ENCODE measurements at regions of chr19 and their contacts with region 1.

Region 1: GRCh38 chr19:40165362-40165937 is 25.8 kb upstream of the MAP3K10 start:
- DNase-seq: peak; percentile 99
- ATAC-seq: peak; percentile 76
- H3K4me3 ChIP-seq: peak overlapping the region in 1 of 2 experiments; percentile 0; a peak in 1 of 4 replicates
- H3K27ac ChIP-seq: 0 out of 2 replicates have a peak overlapping the region, but pooled peaks have one; percentile 0
- H3K4me1 ChIP-seq: peaks cover 15% of the 10 kb centered on the region
- H3K27me3 ChIP-seq: no peaks in the 10 kb centered on the region
- CTCF ChIP-seq: no peak

Region 2: DNA sequence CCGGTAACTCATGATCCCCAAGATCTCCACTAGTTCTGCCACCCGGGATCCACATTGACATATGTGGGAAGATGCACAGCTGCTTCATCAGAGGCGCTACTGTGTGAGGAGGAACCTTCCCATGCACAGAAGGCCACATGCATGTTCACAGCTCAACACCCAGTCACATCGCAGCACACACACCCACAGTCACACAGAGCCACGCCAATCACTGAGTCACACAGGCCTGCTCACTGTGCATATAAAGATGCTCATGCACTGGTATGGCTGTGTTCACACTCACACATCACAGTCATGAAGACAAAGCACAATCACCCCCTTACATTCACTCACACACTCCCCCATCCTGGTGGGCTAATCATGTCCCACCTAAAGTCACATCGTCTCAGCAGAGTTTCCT is 437.4 kb before region 1 on chr19:
- CTCF ChIA-PET with region 1: interaction called, 15 read pairs
- POLR2A ChIA-PET with region 1: interaction called, 6 read pairs
- in situ Hi-C with region 1: no loop called
- intact Hi-C with region 1: no loop called
- DNase-seq: no peak
- ATAC-seq: peak; percentile 51
- H3K4me3 ChIP-seq: no peak overlapping the region
- H3K27ac ChIP-seq: no peak overlapping the region
- H3K4me1 ChIP-seq: no peaks in the 10 kb centered on the region
- H3K27me3 ChIP-seq: peaks cover 61% of the 10 kb centered on the region
- CTCF ChIP-seq: no peak

Region 3: DNA sequence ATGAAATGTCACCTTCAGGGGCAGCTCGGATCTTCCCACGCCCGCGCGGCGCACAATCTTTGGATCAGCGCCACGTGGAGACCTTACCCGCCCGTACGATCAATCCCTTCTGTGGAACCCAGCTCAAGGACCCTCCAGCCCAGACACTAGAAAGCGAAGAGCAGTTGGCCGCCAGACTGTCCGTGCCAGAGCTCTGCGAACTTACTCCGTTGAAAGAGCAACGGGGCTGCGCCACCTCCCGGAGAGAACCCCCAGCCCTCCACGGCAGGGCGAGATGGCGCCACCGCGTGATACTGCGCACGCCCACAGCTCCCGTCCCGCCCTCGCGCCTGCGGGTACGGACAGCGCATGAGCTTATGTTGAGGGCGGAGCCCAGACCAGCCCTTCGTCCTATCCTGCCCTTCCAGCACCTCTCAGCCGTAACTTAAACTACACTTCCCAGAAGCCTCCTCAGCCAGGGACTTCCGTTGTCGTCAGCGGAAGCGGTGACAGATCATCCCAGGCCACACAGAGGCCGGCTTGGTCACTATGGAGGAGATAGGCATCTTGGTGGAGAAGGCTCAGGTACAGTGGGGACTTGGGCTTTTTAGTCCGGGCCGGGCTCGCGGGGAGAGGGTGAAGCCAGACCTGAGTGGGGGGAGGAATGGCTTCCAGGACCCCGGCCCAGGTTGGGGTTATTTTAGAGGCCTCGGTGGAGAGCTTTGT is 194.6 kb before region 1 on chr19 and contains the start of gene PSMC4:
- CTCF ChIA-PET with region 1: interaction called, 15 read pairs
- POLR2A ChIA-PET with region 1: interaction called, 3 read pairs
- in situ Hi-C with region 1: no loop called
- intact Hi-C with region 1: no loop called
- DNase-seq: peak; percentile 100
- ATAC-seq: peak; percentile 98
- H3K4me3 ChIP-seq: peak within 1 kb of the TSS; percentile 35 to 50
- H3K27ac ChIP-seq: peak within 1 kb of the TSS; percentile 82
- H3K4me1 ChIP-seq: peaks cover 17% of the 10 kb centered on the region
- H3K27me3 ChIP-seq: no peaks in the 10 kb centered on the region
- CTCF ChIP-seq: no peak
- total RNA-seq, gene PSMC4: 2,386 TPM

Region 4: DNA sequence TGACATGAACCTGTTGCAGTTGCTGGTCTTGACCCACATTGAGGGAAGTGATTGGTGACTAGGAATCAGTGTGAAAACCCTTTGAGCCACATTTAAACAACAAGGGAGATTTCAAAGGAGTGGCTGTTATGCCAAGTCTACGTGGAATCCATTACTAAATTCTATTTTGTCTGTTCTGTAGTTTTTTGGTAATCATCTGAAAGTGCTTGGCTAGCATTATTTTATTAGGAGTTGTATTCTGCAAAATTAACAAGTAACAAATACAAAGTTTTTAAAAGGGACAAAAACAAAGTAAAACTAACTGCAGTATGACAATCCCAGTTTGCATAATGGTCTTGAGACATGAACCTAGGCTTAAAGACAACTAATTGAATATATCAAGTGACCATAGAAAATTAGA is 60.7 kb before region 1 on chr19:
- CTCF ChIA-PET with region 1: interaction called, 14 read pairs
- POLR2A ChIA-PET with region 1: no interaction called
- in situ Hi-C with region 1: no loop called
- intact Hi-C with region 1: no loop called
- DNase-seq: no peak
- ATAC-seq: peak; percentile 25; the same call in 1 of the 2 replicates
- H3K4me3 ChIP-seq: no peak overlapping the region
- H3K27ac ChIP-seq: no peak overlapping the region
- H3K4me1 ChIP-seq: no peaks in the 10 kb centered on the region
- H3K27me3 ChIP-seq: peaks cover 8% of the 10 kb centered on the region; the same call in 1 of the 2 replicates
- CTCF ChIP-seq: no peak

Region 5: GRCh38 chr19:40184273-40184672 is 18.8 kb after region 1 on chr19:
- CTCF ChIA-PET with region 1: interaction called, 113 read pairs
- POLR2A ChIA-PET with region 1: interaction called, 11 read pairs
- in situ Hi-C with region 1: no loop called
- intact Hi-C with region 1: no loop called
- DNase-seq: no peak
- ATAC-seq: no peak
- H3K4me3 ChIP-seq: no peak overlapping the region
- H3K27ac ChIP-seq: no peak overlapping the region
- H3K4me1 ChIP-seq: no peaks in the 10 kb centered on the region
- H3K27me3 ChIP-seq: peaks cover 17% of the 10 kb centered on the region
- CTCF ChIP-seq: no peak

Region 6: DNA sequence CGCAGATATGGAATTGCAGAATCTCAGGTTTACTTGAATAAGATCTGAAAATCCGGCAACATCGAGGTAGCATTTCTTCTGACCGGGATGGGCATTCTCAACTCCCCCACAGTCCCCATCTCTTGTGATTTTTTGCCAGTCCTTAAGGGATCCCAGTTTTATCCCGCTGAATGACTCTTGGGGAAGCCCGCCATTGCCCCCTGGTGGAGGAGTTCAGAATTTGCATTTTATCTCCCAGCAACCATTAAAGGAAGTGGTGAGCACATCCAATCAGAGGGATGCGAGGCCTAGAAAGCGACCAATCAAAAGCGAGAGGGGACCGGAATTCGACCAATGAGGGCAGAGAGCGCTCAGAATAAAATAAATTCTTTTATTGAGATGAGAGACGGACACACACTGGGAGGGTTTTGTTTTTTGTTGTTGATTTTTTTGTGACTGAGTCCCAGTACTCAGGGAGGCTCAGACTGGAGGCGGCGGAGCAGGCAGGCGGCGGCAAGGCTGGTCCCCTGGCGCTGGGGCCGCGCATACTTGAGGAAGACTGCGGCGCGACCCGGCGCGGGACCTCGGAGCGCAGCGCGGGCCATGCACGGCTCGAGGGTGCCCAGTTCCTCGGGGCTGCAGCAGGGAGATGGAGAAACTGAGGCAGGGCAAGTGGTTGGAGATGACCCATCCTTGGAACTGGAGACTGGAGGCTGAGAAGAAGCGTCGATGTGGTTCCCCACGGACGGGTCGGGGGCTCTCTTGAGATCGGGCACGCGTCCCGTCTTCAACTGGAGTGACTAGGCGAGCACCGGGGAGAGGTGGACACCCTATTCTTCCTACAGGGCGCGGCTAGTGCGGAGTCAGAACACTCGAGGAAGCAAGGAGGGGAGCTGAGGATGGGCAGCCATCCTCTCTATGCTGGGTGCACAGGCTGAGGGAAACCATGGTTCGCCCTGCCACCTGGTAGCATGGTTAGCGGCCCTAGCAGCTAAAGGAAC is 56.7 kb after region 1 on chr19:
- CTCF ChIA-PET with region 1: interaction called, 21 read pairs
- POLR2A ChIA-PET with region 1: interaction called, 4 read pairs
- in situ Hi-C with region 1: no loop called
- intact Hi-C with region 1: no loop called
- DNase-seq: peak; percentile 100
- ATAC-seq: peak; percentile 23
- H3K4me3 ChIP-seq: no peak overlapping the region
- H3K27ac ChIP-seq: no peak overlapping the region
- H3K4me1 ChIP-seq: peaks cover 39% of the 10 kb centered on the region
- H3K27me3 ChIP-seq: peaks cover 26% of the 10 kb centered on the region
- CTCF ChIP-seq: no peak

Region 7: GRCh38 chr19:40523322-40524047 is 358.0 kb after region 1 on chr19:
- CTCF ChIA-PET with region 1: no interaction called
- POLR2A ChIA-PET with region 1: no interaction called
- in situ Hi-C with region 1: no loop called
- intact Hi-C with region 1: no loop called
- DNase-seq: no peak
- ATAC-seq: peak; percentile 86
- H3K4me3 ChIP-seq: no peak overlapping the region
- H3K27ac ChIP-seq: no peak overlapping the region
- H3K4me1 ChIP-seq: 0 out of 2 replicates have a peak, but pooled peaks cover 4% of the 10 kb centered on the region
- H3K27me3 ChIP-seq: no peaks in the 10 kb centered on the region
- CTCF ChIP-seq: peak; percentile 80

Region 8: GRCh38 chr19:41924151-41925145 is 1759.0 kb after region 1 on chr19:
- CTCF ChIA-PET with region 1: no interaction called
- POLR2A ChIA-PET with region 1: interaction called, 10 read pairs
- in situ Hi-C with region 1: no loop called
- intact Hi-C with region 1: no loop called
- DNase-seq: no peak
- ATAC-seq: no peak
- H3K4me3 ChIP-seq: no peak overlapping the region
- H3K27ac ChIP-seq: no peak overlapping the region
- H3K4me1 ChIP-seq: no peaks in the 10 kb centered on the region; the same call in 1 of the 2 replicates
- H3K27me3 ChIP-seq: no peaks in the 10 kb centered on the region
- CTCF ChIP-seq: no peak